ENCODE measurements at regions of chr4 and their contacts with region 1.

Region 1: GRCh38 chr4:145061318-145061920 is 36.6 kb downstream of the ANAPC10 start:
- DNase-seq: no peak
- H3K4me3 ChIP-seq: no peak overlapping the region
- H3K27ac ChIP-seq: no peak overlapping the region
- H3K4me1 ChIP-seq: no peaks in the 10 kb centered on the region
- H3K27me3 ChIP-seq: no peaks in the 10 kb centered on the region
- CTCF ChIP-seq: peak in 1 of 3 donors; percentile 13
- EP300 ChIP-seq: no peak
- POLR2A ChIP-seq: no peak

Region 2: GRCh38 chr4:144174401-144175067 is 886.9 kb before region 1 on chr4:
- intact Hi-C with region 1: loop called in 1 of 4 experiments (anchors 10 kb)
- DNase-seq: no peak
- H3K4me3 ChIP-seq: no peak overlapping the region
- H3K27ac ChIP-seq: no peak overlapping the region
- H3K4me1 ChIP-seq: peaks cover 1% of the 10 kb centered on the region
- H3K27me3 ChIP-seq: no peaks in the 10 kb centered on the region
- CTCF ChIP-seq: peak in 2 of 3 donors; percentile 13 to 16
- EP300 ChIP-seq: no peak
- POLR2A ChIP-seq: no peak

Region 3: GRCh38 chr4:145315811-145316225 is 254.4 kb after region 1 on chr4:
- intact Hi-C with region 1: no loop called
- DNase-seq: no peak
- H3K4me3 ChIP-seq: no peak overlapping the region
- H3K27ac ChIP-seq: no peak overlapping the region
- H3K4me1 ChIP-seq: no peaks in the 10 kb centered on the region
- H3K27me3 ChIP-seq: no peaks in the 10 kb centered on the region
- CTCF ChIP-seq: no peak
- EP300 ChIP-seq: no peak
- POLR2A ChIP-seq: no peak

Measured in ovary (tissue), 10 donors.